Activated B cell treated with CpG ODN at 0.5 μM for 24 hours (primary cell): ENCODE measurements at regions of chr12 and their contacts with region 1.

Region 1: DNA sequence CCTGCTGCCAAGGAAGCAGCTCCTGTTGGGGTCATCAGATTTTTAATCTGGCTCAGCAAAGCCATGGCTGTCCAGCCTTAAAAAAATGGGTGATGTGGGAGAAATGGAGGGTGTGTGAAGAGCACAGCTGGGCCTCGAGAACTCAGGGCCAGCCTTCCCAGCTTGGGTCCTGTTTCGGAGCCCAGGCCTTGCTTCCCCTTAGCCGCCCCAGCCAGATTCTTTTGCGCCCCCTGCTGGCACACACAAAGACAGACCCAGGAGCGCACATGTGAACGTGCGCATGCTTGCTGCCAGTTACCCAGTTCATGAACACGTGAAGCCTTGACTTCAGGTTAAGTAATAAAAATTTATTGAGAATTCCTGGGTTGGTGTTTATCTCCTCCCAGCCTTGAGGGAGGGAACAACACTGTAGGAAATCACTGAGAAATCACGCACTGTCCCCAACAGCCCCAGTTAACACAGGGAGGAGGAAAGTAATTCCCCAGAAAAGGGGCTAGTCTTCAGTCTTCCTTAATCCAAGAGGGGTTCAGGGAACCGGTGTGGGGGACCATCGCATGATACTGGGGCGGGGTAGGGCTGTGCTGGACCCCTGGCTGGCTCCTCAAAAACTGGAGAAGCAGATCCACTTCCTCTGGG is 5.3 kb downstream of the PHB2 start:
- DNase-seq: peak; percentile 76
- ATAC-seq: peak; percentile 64
- H3K4me3 Mint-ChIP-seq: peak overlapping the region; percentile 11
- H3K27ac Mint-ChIP-seq: peak overlapping the region; percentile 86
- H3K4me1 Mint-ChIP-seq: peaks cover 69% of the 10 kb centered on the region
- H3K27me3 Mint-ChIP-seq: no peaks in the 10 kb centered on the region
- CTCF ChIP-seq: no peak

Region 2: DNA sequence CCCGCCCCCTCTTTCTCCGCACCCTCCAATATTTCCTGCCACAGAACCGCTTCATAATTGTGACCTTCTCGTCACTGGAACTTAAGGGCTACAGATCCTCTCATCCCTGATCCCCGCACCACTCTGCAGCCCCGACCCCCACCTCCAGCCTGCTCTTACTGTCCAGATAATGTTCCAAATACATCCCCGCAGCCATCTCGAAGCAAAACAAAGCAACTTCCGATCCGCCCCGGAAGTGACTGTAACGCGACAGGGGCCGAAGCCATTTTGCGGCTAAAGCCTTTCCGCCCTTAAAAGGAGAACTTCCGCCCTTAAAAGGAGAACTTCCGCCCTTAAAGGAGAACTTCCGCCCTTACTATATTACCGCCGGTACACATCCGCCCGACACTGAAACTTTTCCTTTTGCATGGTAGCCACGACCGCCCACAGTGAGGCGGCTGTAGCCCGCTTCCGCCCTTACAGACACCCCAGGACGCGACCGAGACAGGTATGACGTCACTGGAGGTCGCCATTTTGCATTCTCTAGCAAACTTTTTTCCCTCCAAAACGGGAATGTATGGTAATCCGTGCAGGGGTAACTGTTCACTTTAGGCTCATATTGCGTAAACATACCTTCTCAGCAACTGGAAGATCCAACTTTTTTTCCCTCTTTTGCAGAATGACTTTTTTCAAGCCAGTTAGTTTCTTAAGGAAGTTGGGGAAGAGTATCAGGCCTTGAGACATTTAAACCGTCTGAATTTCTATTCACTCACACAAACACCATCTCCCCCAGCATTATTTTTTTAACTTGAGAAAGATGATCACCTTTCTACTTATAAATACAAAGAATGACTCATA is 302.0 kb before region 1 on chr12 and contains the start of gene ING4:
- CTCF ChIA-PET with region 1: no interaction called
- POLR2A ChIA-PET with region 1: no interaction called
- intact Hi-C with region 1: loop called (anchors 1 kb)
- DNase-seq: peak; percentile 80
- ATAC-seq: peak; percentile 97
- H3K4me3 Mint-ChIP-seq: peak within 1 kb of the TSS; percentile 97
- H3K27ac Mint-ChIP-seq: peak within 1 kb of the TSS; percentile 95
- H3K4me1 Mint-ChIP-seq: peaks cover 27% of the 10 kb centered on the region
- H3K27me3 Mint-ChIP-seq: no peaks in the 10 kb centered on the region
- CTCF ChIP-seq: no peak
- total RNA-seq, gene ING4: 31.6 and 39.2 TPM in 2 replicates

Region 3: DNA sequence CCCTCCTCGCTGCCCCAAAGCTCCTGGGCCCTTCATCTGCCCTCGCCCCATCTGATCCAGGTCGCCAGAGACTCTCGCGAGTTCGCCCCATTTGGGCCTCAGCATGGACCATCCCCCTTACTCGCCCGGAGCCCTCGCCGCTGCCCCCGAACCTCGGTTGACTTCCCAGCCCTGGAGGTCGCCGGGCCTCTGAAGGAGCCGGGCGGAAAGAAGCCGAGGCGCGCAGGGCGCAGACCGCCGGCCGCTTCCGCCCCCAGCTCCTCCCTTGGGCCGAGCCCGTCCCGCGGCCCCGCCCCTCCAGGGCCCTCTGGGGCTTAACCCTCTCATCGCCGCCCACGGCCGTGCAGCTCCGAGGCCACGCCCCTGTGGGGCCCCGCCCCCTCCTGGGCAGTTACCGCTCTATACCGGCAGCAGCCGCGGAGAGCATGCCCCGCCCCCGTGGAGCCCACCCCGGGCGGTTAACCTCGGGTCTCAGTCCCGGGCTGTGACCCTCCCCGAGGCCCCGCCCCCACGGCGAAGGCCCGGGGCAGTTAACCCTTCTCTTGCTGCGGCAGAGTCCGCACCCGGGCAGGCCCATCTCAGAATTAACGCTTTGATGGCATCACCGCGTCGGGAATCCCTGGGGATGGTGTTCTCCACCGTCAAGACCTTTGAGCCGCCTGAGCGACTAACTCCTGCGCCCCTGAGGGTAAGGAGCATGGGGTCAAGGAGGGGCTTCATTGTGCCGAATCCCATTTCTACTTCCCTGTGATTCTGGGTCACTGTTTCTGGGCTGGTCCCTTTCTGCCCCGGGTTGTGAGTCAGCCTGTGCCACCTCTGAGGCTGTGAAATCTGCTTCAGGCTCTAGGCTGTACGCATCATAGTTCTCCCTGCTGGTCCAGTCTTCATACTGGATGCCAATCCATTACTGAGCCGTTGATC is 91.8 kb before region 1 on chr12 and contains the start of gene SPSB2:
- CTCF ChIA-PET with region 1: interaction called, 22 read pairs
- POLR2A ChIA-PET with region 1: interaction called, 41 read pairs
- intact Hi-C with region 1: loop called (anchors 1 kb)
- DNase-seq: peak; percentile 100
- ATAC-seq: peak; percentile 88
- H3K4me3 Mint-ChIP-seq: peak within 1 kb of the TSS; percentile 88
- H3K27ac Mint-ChIP-seq: peak within 1 kb of the TSS; percentile 85
- H3K4me1 Mint-ChIP-seq: peaks cover 37% of the 10 kb centered on the region
- H3K27me3 Mint-ChIP-seq: no peaks in the 10 kb centered on the region
- CTCF ChIP-seq: no peak
- total RNA-seq, gene SPSB2: 14.4 and 16.2 TPM in 2 replicates

Region 4: DNA sequence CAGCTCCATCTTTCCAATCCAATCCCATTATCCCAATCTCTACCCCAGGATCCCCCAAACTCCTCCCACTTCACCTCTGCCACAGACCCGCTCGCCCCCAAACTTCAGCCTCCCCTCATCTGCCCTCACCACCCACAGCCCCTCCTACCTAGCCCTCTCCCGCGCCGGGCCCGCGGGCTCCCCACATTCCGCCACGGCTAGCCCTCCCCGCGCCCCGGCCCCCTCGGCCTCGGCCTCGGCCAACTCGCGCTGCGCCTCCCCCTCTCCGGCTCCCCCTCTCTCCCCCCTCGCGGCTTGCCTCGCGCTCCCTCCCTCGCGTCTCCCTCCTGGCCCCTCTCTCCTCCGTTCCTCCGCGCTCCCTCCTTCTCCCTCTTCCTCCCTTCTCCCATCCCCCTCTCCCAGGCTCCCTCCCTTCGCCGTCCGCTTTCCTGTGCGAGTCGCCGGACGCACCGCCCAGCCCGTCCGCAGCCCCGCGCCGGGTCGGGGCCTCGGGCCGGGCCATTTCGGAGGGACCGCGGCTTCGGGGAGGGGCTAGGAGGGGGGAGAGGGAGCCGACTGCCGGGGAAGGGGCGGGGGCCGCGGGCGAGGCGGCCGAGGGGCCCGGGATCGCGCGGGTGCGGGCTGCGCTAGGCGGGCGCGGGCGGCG is 37.6 kb before region 1 on chr12 and contains the start of gene ATN1:
- CTCF ChIA-PET with region 1: interaction called, 20 read pairs
- POLR2A ChIA-PET with region 1: interaction called, 1,516 read pairs
- intact Hi-C with region 1: loop called (anchors 1 kb)
- DNase-seq: peak; percentile 58
- ATAC-seq: peak; percentile 42
- H3K4me3 Mint-ChIP-seq: peak within 1 kb of the TSS; percentile 86
- H3K27ac Mint-ChIP-seq: peak within 1 kb of the TSS; percentile 86
- H3K4me1 Mint-ChIP-seq: peaks cover 54% of the 10 kb centered on the region
- H3K27me3 Mint-ChIP-seq: no peaks in the 10 kb centered on the region
- CTCF ChIP-seq: no peak
- total RNA-seq, gene ATN1: 42.8 and 50.9 TPM in 2 replicates

Region 5: GRCh38 chr12:6953442-6954315 is 11.5 kb before region 1 on chr12:
- CTCF ChIA-PET with region 1: interaction called, 571 read pairs
- POLR2A ChIA-PET with region 1: interaction called, 1,516 read pairs
- intact Hi-C with region 1: no loop called
- DNase-seq: peak; percentile 72
- ATAC-seq: peak; percentile 38
- H3K4me3 Mint-ChIP-seq: peak overlapping the region; percentile 99
- H3K27ac Mint-ChIP-seq: peak overlapping the region; percentile 96
- H3K4me1 Mint-ChIP-seq: peaks cover 85% of the 10 kb centered on the region
- H3K27me3 Mint-ChIP-seq: no peaks in the 10 kb centered on the region
- CTCF ChIP-seq: no peak

Region 6: DNA sequence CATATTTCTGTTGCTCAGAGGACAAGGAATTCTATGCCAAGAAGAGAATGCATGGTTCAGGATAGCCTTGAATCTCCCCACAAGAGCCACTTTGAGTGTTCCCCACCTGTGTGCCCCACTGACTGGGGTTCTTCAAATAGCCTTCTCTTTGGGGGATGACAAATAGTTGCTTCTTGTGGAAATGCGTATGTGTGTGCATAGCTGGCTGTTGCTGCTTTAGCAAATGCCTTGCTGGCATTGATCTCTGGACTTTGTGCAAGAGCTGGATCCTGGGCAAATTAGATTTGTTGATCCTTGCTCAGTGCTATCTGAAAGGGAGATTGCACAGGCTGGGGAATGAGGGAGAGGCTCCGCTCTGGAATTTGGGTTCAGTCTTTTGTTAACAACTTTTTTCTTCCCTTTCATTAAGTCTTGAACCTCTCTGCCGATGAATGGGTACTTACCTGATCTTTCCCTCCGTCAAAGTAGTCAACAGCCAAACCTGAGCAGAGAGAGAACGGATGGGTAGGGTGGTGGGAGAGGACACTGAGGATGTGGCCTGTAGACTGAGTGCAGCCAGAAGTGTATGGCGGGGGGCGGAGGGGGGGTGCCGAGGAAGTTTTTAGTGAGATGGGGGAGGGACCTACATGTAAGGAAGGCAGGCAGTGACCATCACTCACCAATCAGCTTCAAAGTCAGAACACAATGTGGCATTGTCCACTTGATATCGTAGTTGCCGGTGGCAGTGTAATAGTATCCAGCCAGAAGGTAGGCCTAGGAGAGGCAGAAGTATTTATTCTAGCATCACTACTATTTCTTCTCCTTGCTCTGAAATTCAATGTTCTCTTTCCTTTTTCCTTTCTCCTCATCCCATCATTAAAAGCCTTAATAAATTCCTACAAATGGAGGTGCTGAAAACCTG is 16.3 kb after region 1 on chr12:
- CTCF ChIA-PET with region 1: no interaction called
- POLR2A ChIA-PET with region 1: no interaction called
- intact Hi-C with region 1: no loop called
- DNase-seq: no peak
- ATAC-seq: no peak
- H3K4me3 Mint-ChIP-seq: no peak overlapping the region
- H3K27ac Mint-ChIP-seq: no peak overlapping the region
- H3K4me1 Mint-ChIP-seq: no peaks in the 10 kb centered on the region
- H3K27me3 Mint-ChIP-seq: no peaks in the 10 kb centered on the region
- CTCF ChIP-seq: no peak

Region 7: DNA sequence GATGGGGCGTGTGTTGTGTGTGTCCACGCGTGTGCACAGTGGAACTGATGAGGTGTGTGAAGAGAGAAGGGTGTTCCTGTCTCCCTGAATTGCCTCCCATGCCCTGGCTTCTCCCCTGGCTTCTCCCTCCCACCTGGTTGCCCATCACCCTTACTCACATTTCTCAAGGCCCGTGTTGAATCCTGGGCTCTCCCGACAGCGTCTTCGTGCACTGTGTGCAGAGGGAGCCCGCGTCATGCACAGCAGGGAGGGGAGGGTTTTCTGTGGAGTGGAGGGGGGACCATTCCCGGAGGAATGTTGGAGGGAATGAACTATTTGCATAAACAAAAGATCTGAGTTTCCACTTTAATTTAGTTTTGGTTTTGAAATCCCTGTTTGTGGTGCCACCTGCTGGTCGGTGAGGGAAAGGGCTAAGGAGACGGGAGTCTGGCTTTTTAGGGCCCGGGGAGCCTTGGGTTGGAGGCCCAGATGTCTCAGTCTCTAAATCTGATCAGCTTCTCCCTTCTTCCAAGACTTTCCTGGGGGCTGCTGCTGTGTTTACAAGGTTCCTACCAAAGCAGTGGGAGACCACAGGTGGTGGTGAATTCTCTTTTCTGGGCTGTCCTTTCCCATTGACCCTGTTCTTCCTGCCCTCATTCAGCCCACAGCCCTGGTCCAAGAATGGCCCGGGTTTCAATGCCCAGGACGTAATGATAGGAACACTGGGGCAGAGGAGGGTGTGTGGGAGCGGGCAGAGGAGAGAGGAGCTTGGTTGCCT is 127.3 kb after region 1 on chr12 and contains the start of gene C1R:
- CTCF ChIA-PET with region 1: no interaction called
- POLR2A ChIA-PET with region 1: no interaction called
- intact Hi-C with region 1: loop called (anchors 1 kb)
- DNase-seq: peak; percentile 53
- ATAC-seq: peak; percentile 80
- H3K4me3 Mint-ChIP-seq: peak within 1 kb of the TSS; percentile 87
- H3K27ac Mint-ChIP-seq: peak within 1 kb of the TSS; percentile 61
- H3K4me1 Mint-ChIP-seq: peaks cover 8% of the 10 kb centered on the region
- H3K27me3 Mint-ChIP-seq: no peaks in the 10 kb centered on the region
- CTCF ChIP-seq: no peak
- total RNA-seq, gene C1R: 0.54 and 0.78 TPM in 2 replicates

Region 8: DNA sequence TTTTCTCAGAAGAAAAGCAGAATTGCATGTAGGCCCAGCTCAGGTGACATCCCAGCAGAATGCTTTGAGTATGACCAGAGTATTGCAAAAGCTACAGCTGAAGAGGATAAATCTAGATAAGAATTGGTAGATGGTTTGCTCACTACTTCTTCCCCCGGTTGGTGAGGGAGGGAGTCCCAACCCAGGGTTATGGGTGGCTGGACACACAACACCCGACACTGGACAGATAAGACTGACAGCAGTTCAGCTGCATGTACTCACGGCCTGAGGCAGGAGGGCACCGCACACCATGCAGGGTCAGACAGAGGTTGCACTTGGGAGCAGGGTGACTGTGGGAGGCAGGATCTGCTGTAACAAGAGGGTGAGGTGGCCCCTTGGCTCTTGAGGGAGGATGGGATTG is 783.7 kb after region 1 on chr12:
- CTCF ChIA-PET with region 1: no interaction called
- POLR2A ChIA-PET with region 1: no interaction called
- intact Hi-C with region 1: no loop called
- DNase-seq: no peak
- ATAC-seq: no peak
- H3K4me3 Mint-ChIP-seq: no peak overlapping the region
- H3K27ac Mint-ChIP-seq: peak overlapping the region; percentile 65
- H3K4me1 Mint-ChIP-seq: peaks cover 27% of the 10 kb centered on the region
- H3K27me3 Mint-ChIP-seq: peaks cover 10% of the 10 kb centered on the region
- CTCF ChIP-seq: no peak